AG04449 (cell line): ENCODE measurements at regions of chr13 and their contacts with region 1.

Region 1: GRCh38 chr13:19984430-19985218 is 26.1 kb downstream of the ZMYM2 start:
- DNase-seq: no peak
- H3K4me3 ChIP-seq: no peak overlapping the region
- CTCF ChIP-seq: peak; percentile 55

Region 2: GRCh38 chr13:19927117-19927748 is 57.4 kb before region 1 on chr13:
- CTCF ChIA-PET with region 1: interaction called, 10 read pairs
- POLR2A ChIA-PET with region 1: no interaction called
- DNase-seq: no peak
- H3K4me3 ChIP-seq: no peak overlapping the region
- CTCF ChIP-seq: peak; percentile 20

Region 3: GRCh38 chr13:19961489-19961888 is 23.1 kb before region 1 on chr13:
- CTCF ChIA-PET with region 1: interaction called, 12 read pairs
- POLR2A ChIA-PET with region 1: no interaction called
- DNase-seq: no peak
- H3K4me3 ChIP-seq: no peak overlapping the region
- CTCF ChIP-seq: no peak

Region 4: GRCh38 chr13:19967621-19968020 is 17.0 kb before region 1 on chr13:
- CTCF ChIA-PET with region 1: interaction called, 12 read pairs
- POLR2A ChIA-PET with region 1: no interaction called
- DNase-seq: no peak
- H3K4me3 ChIP-seq: no peak overlapping the region
- CTCF ChIP-seq: no peak

Region 5: DNA sequence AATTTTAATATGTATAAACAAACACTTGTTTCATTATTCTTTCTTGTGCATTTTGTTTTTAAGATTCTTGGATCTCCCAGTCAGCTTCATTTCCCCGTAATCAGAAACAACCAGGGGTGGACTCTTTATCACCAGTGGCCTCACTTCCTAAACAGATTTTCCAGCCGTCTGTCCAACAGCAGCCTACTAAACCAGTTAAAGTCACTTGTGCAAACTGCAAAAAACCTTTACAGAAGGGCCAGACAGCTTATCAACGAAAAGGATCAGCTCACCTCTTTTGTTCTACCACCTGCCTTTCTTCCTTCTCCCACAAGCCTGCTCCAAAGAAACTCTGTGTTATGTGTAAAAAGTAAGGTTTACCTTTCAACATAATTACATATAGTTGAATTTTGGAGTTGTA is 18.2 kb after region 1 on chr13:
- CTCF ChIA-PET with region 1: interaction called, 57 read pairs
- POLR2A ChIA-PET with region 1: no interaction called
- DNase-seq: no peak
- H3K4me3 ChIP-seq: no peak overlapping the region
- CTCF ChIP-seq: no peak

Region 6: DNA sequence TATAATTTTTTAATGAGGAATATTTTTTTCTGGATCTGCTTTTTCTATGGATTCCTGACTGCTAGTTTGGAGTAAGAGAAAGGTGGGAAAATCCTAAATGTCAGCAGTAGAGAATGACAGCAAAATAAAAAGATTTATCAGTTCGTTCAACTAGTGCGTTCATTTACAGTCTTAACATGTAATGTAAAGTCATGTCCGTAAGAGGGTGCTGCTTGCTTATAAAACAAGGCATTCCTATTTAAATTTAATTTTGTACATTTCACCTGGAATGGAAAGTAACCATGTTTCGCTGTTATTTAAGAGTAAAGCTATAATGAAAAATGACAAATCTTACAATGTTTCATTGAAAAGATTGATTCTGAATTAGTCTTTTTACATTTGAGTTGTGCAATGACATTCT is 50.5 kb after region 1 on chr13:
- CTCF ChIA-PET with region 1: interaction called, 11 read pairs
- POLR2A ChIA-PET with region 1: no interaction called
- DNase-seq: no peak
- H3K4me3 ChIP-seq: no peak overlapping the region
- CTCF ChIP-seq: no peak

Region 7: DNA sequence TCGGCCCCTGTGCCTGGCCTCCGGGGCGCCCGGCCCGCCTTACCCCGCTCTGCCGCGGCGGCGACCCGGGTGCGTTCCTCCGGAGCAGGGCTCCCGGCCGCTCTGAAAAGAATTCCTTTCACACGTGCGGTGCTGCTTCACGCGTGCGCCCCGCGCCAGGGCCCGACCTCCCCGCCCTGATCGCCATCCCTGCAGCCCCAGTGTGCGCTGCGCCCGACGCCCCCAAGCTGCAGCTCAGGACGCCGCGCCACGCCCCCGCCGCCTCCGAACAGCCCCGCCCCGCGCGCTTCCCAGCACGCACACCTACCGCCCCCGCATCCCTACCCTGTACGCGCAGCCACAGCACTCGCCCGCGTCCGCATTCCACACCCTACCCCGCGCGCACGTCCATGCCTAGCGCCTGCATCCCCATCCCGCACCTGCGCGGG is 176.2 kb after region 1 on chr13 and contains the start of gene GJA3:
- CTCF ChIA-PET with region 1: interaction called, 17 read pairs
- POLR2A ChIA-PET with region 1: no interaction called
- DNase-seq: no peak
- H3K4me3 ChIP-seq: peak within 1 kb of the TSS; percentile 47
- CTCF ChIP-seq: no peak

Region 8: GRCh38 chr13:20512042-20512683 is 527.5 kb after region 1 on chr13:
- CTCF ChIA-PET with region 1: no interaction called
- POLR2A ChIA-PET with region 1: no interaction called
- DNase-seq: no peak
- H3K4me3 ChIP-seq: no peak overlapping the region
- CTCF ChIP-seq: no peak